Sciatic nerve (tissue), 2 donors: ENCODE measurements at regions of chr10 and their contacts with region 1.

Region 1: GRCh38 chr10:98045785-98046389 is 15.5 kb upstream of the CRTAC1 start:
- DNase-seq: peak; percentile 68
- ATAC-seq: peak; percentile 70

Region 2: GRCh38 chr10:97759158-97759887 is 286.6 kb before region 1 on chr10:
- intact Hi-C with region 1: loop called (anchors 1 kb)
- DNase-seq: peak; percentile 89
- ATAC-seq: peak; percentile 83

Region 3: DNA sequence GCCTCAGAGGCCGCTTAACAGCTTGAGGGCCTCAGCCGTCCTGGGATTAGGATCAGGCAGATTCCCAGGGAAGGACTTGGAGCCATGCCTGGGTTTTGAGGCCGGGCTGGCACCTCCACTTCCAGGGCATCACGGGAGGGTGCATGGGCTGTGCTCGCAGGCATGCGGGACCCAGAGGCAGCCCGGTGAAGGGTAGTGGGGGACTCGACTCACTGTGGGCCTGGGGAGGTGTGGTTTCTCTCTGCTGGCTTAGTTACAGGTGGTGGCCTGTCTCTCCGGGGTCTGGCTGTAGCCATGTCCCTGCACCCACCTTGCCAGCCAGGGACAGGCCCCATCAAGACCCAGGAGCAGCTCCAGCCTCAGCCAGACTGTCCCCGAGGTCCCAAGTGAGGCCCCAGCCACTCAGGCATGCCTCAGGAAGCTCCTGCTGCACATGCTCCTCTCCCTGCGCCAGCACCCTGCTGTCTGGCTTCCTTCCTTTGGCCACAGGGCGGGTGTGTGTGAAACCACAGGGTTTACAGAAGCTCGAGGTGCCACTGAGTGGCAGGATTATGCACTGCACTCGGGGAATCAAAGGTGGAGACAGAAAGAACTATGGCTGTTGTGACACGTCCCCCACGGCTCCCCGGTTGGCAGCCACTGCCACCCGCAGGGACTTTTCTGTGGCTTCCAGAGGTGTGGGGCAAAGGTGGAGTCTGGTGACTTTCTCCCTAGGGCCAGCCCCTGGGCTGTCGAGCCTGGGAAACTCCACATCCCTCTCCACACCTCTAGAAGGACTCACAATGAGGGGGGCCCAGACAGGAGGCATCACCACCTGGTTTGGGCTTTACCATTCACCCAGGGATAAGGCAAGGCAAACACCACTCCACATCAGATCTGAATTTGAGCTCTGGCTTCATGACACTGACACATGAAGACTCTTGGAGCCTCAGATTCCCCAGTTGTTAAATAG is 176.5 kb before region 1 on chr10:
- intact Hi-C with region 1: no loop called
- DNase-seq: peak; percentile 88
- ATAC-seq: peak; percentile 94

Region 4: GRCh38 chr10:97914837-97915211 is 131.1 kb before region 1 on chr10:
- intact Hi-C with region 1: loop called (anchors 5 kb)
- DNase-seq: peak; percentile 88
- ATAC-seq: peak; percentile 82